Right ventricle myocardium superior (tissue), 1 donor: ENCODE measurements at regions of chr1 and their contacts with region 1.

Region 1: DNA sequence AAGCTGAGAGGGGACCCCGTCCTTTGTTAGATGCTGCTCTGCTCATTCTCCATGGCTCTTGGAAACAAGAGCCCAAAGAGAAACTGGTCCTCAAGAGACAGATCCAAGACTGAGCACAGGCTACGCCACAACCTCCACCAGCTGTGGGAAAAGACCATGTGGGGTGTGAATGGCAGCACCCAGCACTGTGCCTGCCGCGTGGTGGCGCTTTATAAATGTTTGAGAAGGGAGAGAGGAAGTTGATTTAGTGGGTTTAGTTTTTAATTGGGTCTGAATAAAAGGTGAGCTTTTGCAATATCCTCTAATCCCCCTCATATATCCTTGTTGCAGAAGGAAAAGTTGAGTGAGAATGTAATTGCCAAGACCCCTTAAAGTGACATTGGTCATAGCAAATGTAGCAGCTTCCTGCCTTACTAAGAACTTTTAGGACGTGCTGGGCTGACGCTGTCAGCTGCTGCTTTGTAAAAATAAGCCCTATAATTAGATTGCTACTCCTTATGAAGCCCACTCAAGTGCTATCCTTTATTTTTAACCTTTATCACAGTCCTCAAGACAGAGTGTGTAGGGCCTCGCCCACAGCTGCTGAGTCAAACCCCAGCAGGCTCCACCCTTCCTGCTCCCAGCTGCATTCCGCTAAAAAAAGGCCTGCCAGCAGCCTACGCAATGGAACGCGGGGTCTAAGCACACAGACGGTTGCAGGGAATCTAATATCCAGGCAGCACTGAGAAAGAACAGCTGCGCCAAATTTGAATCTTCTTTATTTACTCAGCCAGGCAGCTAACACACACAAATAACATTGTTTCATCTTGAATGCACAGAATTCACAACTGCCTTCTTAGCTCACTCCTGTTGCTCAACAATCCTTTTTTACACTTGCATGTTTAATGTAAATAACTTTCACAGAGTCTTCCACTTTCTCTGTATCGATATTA is 47.4 kb upstream of the PRDX6 start:
- DNase-seq: peak; percentile 92
- ATAC-seq: peak; percentile 96

Region 2: DNA sequence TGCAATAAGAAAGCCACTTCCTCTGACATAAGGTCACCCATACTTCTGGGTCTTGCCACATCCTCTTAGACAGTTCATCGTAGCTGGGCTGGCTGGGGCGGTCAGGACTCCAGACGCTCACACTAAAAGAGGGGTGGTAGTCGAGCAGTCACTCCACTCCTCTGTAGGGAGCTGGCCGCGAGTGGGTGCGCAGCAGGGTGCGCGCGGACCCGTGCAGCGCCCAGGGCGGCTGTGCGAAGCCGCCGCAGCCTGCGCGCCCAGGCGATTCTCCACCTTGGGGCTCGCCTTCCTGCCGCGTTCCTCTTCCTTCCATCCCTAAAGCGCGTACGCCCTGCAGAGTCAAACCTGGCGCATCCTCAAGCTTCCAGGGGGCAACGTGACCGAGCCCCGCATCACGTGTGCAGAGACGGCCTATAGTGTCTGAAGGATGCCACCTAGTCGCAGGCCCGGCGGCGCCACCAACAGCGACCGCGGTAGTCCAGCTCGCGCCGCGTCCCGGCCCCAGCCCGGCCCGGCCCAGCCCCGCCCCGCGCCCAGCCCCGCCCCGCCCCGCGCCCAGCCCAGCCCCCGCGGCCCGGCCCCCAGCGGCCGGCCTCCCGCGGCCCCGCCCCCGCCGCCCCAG is 47.0 kb after region 1 on chr1:
- intact Hi-C with region 1: loop called (anchors 5 kb)
- DNase-seq: peak; percentile 97
- ATAC-seq: peak; percentile 89

Region 3: GRCh38 chr1:173489149-173489934 is 59.6 kb after region 1 on chr1:
- intact Hi-C with region 1: no loop called
- DNase-seq: no peak
- ATAC-seq: peak; percentile 16

Region 4: DNA sequence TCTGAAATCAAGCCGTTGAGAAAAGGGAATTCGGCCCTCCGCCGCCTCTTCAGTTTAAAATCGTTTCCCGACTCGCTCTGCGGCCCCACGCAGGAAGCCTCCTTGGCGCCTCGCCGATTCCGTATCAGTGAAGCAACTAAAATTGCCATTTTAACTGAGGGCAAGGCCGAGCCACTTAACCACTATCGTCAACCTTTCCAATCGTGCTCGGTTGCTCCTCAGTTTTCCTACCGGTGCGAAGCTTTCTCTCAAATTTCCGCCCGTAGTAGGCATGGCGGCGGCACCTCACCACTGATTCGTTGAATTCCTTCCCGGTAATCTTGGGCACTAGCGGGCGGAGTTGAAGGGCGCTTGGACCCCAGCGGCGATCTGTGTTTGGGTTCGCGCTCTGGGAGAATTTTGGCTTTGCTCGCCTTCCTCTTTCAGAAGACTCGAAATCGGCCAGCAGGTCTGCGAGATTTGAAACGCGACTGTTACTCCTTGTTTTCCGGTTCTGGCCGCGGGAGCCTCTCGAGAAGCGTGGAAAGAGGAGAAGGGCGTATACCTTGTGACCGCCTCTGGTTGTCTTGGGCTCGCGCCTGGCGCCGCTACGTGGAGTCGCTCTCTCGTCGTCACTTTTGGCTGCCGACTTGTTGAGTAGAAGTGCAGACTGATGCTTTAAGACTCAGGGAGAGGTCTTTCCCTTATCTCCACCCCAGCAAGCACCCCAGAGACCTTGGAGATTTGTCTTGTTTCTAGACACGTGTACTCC is 394.8 kb after region 1 on chr1 and contains the starts of genes CENPL and DARS2:
- intact Hi-C with region 1: loop called (anchors 5 kb)
- DNase-seq: peak; percentile 97
- ATAC-seq: peak; percentile 98
- total RNA-seq, gene CENPL: 2.6 TPM
- total RNA-seq, gene DARS2: 12.9 TPM